AG04450 (cell line): ENCODE measurements at regions of chr3 and their contacts with region 1.

Region 1: DNA sequence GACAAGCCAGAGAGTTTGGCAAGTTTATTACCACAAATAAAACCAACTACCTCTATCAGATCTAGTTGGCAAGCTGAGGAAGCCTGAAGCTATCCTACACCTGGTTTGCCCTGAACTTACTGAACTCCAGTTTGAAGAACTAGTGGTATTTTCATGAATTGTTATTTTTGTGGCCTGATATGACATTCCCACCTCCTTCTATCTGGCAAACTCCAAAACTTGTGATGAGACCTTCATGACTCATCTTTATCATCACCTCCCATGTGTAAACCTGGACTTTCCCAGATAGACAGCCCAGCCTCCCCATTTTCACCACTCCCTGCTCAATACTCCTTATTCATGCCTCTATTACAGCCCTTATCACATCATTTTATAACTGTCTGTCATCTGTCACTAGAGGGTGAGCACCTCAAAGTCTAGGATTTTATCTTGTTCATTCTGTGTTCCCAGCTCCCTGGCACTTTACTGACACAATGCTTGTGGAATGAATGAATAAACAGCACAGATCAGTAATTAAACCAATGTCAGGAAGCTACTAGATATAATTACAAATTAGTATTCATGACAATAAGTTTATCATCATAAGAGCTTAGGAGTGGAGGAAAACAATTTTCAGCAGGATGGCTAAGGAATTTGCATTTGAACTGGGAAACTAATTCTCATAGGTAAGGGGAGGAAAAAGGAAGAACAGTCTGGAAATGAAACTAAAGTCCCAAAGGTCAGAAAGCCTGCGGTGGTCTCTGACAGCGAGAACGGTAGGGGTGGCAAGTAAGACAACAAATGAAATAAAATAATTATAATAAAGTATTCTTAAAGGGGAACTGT is 13.2 kb upstream of the TRANK1 start:
- DNase-seq: peak; percentile 58
- H3K4me3 ChIP-seq: peak overlapping the region; percentile 22; the same call in 1 of the 2 replicates
- H3K27ac ChIP-seq: peak overlapping the region; percentile 78
- H3K27me3 ChIP-seq: peaks cover 2% of the 10 kb centered on the region
- CTCF ChIP-seq: no peak

Region 2: GRCh38 chr3:36480911-36481648 is 477.0 kb before region 1 on chr3:
- CTCF ChIA-PET with region 1: no interaction called
- POLR2A ChIA-PET with region 1: no interaction called
- DNase-seq: peak; percentile 10
- H3K4me3 ChIP-seq: no peak overlapping the region
- H3K27ac ChIP-seq: no peak overlapping the region
- H3K27me3 ChIP-seq: peaks cover 3% of the 10 kb centered on the region
- CTCF ChIP-seq: no peak

Region 3: GRCh38 chr3:36729204-36730056 is 228.6 kb before region 1 on chr3:
- CTCF ChIA-PET with region 1: interaction called, 31 read pairs
- POLR2A ChIA-PET with region 1: no interaction called
- DNase-seq: peak; percentile 23
- H3K4me3 ChIP-seq: no peak overlapping the region
- H3K27ac ChIP-seq: no peak overlapping the region
- H3K27me3 ChIP-seq: peaks cover 9% of the 10 kb centered on the region
- CTCF ChIP-seq: peak; percentile 78

Region 4: GRCh38 chr3:36741285-36741684 is 216.8 kb before region 1 on chr3:
- CTCF ChIA-PET with region 1: interaction called, 18 read pairs
- POLR2A ChIA-PET with region 1: no interaction called
- DNase-seq: no peak
- H3K4me3 ChIP-seq: no peak overlapping the region
- H3K27ac ChIP-seq: no peak overlapping the region
- H3K27me3 ChIP-seq: peaks cover 12% of the 10 kb centered on the region
- CTCF ChIP-seq: peak; percentile 40

Region 5: DNA sequence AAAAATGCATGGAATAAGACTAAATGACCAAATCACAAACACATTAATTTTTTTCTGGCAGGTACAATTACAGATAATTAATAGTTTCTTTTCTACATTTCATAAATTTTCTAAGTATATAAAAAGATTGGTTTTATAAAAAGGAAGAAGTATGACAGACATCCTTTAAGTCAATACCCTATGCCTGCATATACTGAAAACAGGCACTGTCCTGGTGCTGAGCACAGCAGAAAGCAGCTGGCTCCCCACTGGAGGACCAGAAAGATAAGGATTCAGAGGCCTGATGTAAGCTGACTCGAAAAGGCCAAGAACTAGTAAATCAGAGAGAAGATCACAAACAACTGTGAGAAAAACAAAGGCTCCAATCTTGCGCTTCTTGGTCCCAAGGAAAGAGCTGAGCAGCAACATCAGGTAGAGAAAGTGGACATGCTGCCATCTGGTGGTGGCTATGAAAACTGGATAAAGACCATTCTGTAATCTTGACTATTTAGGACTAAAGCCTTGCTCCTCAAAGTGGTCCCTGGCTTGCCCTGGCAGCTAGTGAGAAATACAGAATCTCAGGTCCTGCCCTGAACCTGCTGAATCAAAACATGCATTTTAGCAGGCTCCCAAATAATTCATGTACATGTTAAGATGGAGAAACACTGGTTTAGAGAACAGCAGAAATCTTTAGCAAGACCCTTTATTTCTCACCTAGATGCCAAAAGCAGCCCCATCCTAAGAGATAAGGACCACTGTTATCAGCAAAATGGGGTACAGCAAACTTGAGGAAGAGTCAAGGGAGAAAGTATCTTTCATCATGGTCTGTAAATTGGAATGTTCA is 89.2 kb before region 1 on chr3:
- CTCF ChIA-PET with region 1: interaction called, 58 read pairs
- POLR2A ChIA-PET with region 1: no interaction called
- DNase-seq: peak; percentile 32
- H3K4me3 ChIP-seq: no peak overlapping the region
- H3K27ac ChIP-seq: no peak overlapping the region
- H3K27me3 ChIP-seq: no peaks in the 10 kb centered on the region
- CTCF ChIP-seq: peak; percentile 84

Region 6: DNA sequence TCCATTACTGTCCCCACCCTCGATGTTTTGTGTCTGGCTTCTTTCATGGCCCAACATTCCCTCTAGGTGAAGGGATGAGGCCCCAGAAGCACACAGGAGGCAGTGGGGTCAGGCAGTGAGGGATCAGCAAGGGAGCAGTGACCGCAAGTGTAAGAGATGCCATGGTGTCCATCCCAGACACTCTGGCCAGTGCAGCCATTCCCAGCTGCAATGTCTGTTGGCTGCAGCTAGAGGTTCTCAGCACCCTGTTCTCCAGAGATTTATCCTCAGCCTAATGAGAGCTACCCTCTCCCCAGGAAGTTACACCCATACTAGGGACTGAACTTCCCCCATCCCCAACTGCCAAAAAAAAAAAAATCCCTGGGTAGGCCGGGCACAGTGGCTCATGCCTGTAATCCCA is 53.4 kb before region 1 on chr3:
- CTCF ChIA-PET with region 1: interaction called, 40 read pairs
- POLR2A ChIA-PET with region 1: no interaction called
- DNase-seq: no peak
- H3K4me3 ChIP-seq: no peak overlapping the region
- H3K27ac ChIP-seq: no peak overlapping the region
- H3K27me3 ChIP-seq: no peaks in the 10 kb centered on the region
- CTCF ChIP-seq: peak; percentile 65

Region 7: DNA sequence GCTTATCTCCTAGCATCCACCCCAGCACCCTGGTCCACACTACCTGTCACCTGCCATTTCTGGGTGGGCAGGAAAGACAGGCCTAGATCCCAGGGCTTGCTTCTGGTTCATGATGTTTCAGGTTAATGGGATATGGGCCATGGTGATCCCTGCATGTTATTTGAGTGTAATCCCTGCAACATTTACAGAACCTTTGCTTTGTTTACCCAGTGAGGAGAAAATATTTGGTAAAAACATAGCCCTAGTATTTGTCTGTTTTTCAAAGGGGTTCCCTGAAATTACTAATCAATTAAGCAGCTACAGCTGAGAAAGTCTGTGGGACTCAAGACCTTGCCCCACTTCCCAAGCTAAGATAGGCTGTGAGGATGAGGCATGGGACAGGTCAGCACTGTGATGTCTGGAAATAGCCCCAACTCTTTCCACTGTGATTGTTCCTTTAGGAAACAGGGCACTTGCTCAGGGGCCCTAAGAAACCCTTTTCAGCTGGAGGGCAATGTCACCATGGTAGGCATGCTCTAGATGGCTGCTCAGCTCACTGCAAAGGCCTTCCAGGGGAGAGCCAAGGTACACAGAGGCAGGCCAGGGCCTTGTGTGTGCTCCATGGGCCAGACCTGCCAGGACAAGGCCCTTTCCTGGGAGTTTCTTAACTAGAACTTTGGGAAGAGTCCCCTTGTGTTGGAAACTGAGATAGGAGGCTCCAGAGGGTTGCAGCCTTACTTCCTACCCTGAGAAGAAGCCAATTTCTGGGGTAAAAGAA is 24.4 kb before region 1 on chr3:
- CTCF ChIA-PET with region 1: interaction called, 30 read pairs
- POLR2A ChIA-PET with region 1: no interaction called
- DNase-seq: no peak
- H3K4me3 ChIP-seq: no peak overlapping the region
- H3K27ac ChIP-seq: no peak overlapping the region
- H3K27me3 ChIP-seq: no peaks in the 10 kb centered on the region
- CTCF ChIP-seq: no peak

Region 8: GRCh38 chr3:36969540-36970432 is 11.7 kb after region 1 on chr3:
- CTCF ChIA-PET with region 1: interaction called, 49 read pairs
- POLR2A ChIA-PET with region 1: no interaction called
- DNase-seq: no peak
- H3K4me3 ChIP-seq: no peak overlapping the region
- H3K27ac ChIP-seq: peak overlapping the region; percentile 73
- H3K27me3 ChIP-seq: no peaks in the 10 kb centered on the region
- CTCF ChIP-seq: no peak